CD4-positive, alpha-beta T cell (primary cell): ENCODE measurements at regions of chr9 and their contacts with region 1.

Region 1: GRCh38 chr9:136978073-136978864 is 965 bp downstream of the PTGDS start:
- DNase-seq: peak; percentile 42 to 88 (median 66)
- ATAC-seq: peak; percentile 69
- H3K4me3 ChIP-seq: peak overlapping the region; percentile 29
- H3K4me3 Mint-ChIP-seq: no peak overlapping the region
- H3K27ac ChIP-seq: no peak overlapping the region
- H3K27ac Mint-ChIP-seq: no peak overlapping the region
- H3K4me1 ChIP-seq: peaks cover 57% of the 10 kb centered on the region
- H3K4me1 Mint-ChIP-seq: peaks cover 20% of the 10 kb centered on the region
- H3K27me3 ChIP-seq: peaks cover 1 to 5% of the 10 kb centered on the region in 2 experiments
- H3K27me3 Mint-ChIP-seq: peaks cover 14% of the 10 kb centered on the region
- CTCF ChIP-seq: no peak

Region 2: GRCh38 chr9:135281791-135282731 is 1696.2 kb before region 1 on chr9:
- CTCF ChIA-PET with region 1: no interaction called
- POLR2A ChIA-PET with region 1: no interaction called
- intact Hi-C with region 1: no loop called
- DNase-seq: peak in 10 of 14 experiments; percentile 4 to 52 (median 22)
- ATAC-seq: peak; percentile 62
- H3K4me3 ChIP-seq: no peak overlapping the region
- H3K4me3 Mint-ChIP-seq: no peak overlapping the region
- H3K27ac ChIP-seq: no peak overlapping the region
- H3K27ac Mint-ChIP-seq: peak overlapping the region; percentile 24
- H3K4me1 ChIP-seq: no peaks in the 10 kb centered on the region
- H3K4me1 Mint-ChIP-seq: no peaks in the 10 kb centered on the region
- H3K27me3 ChIP-seq: peaks cover 0 to 4% of the 10 kb centered on the region in 2 experiments
- H3K27me3 Mint-ChIP-seq: no peaks in the 10 kb centered on the region
- CTCF ChIP-seq: no peak

Region 3: DNA sequence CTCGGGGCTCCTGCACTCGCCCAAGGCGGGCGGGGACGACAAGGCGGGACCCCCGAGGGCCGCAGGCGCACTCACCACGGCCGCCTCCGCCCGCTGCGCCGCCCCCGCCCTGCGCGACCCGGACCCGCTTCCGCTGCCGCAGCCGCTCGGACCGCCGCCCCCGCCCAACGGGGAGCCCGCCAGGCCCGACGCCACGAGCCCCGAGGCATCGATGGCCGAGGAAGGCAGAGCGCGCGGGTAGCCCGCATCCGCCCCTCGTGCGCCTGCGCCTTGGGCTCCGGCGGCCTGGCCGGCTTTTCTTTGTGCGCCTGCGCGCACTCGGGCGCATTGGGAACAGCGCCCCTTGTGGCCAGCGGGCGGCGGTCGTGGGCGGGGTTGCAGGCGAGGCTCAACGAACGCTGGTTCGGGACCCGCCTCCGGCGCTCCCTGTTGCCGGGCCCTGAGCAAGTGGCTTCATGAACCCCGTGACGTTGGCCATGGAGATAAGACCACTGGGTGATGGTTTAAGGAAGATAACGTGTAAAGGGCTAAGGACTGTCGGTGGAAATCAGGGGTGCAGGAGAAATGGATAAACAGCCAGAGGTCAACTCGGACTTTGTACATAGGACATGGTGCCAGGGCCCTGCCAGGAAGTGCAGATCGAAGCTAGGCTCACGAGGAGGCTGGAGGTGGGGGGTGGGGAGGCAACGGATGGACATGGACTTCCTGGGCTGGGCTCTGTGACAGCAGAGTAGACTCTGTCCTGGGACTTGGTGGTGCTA is 33.6 kb before region 1 on chr9 and contains the starts of genes C8G and FBXW5:
- CTCF ChIA-PET with region 1: interaction called, 3 read pairs
- POLR2A ChIA-PET with region 1: interaction called, 4 read pairs
- intact Hi-C with region 1: loop called in 1 of 2 experiments (anchors 1 kb)
- DNase-seq: peak; percentile 84 to 97 (median 94)
- ATAC-seq: peak; percentile 86
- H3K4me3 ChIP-seq: peak within 1 kb of the TSS; percentile 69
- H3K4me3 Mint-ChIP-seq: peak within 1 kb of the TSS; percentile 87
- H3K27ac ChIP-seq: peak within 1 kb of the TSS in 1 of 2 donors; percentile 21
- H3K27ac Mint-ChIP-seq: peak within 1 kb of the TSS; percentile 59
- H3K4me1 ChIP-seq: peaks cover 49% of the 10 kb centered on the region
- H3K4me1 Mint-ChIP-seq: peaks cover 5% of the 10 kb centered on the region
- H3K27me3 ChIP-seq: no peaks in the 10 kb centered on the region
- H3K27me3 Mint-ChIP-seq: no peaks in the 10 kb centered on the region
- CTCF ChIP-seq: peak; percentile 96
- total RNA-seq, gene C8G: not detected
- total RNA-seq, gene FBXW5: 41.0 to 41.7 TPM

Region 4: DNA sequence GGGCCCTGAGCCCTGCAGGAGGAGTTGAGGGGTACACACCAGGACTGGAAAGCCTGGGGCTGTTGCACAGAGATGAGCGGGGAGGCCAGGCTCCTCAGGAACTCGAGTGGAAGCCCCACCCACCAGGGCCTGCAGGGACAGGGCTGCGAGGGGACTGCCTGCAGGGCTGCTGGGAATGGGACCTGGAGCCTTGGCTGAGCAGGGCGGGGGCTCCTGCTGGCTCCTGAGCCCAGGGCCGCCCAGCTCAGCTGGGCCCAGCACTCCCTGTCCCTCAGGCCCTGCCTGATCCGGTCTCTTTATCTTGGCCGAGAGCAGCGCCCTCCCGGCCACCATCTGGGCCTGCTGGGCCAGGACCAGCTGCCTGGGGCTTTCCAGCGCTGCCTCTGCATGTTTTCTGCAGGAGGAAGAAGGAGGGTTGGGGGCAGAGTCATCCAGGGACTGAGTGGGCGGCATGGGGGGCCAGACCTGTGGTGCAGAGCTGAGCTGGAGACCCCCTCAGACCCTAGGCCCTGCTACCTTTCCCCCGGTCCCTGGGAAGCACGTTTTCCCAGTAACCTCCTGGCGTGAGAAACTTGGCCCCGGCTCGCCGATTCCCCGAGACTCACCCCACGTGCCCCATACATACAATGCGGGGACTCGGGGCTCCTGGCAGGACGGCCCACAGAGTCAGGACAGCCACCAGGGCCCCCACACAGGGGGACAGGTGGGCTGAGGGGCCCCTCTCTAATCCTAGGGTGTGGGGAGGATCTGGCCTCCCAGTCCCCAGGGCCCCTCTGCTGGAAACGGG is 16.8 kb before region 1 on chr9:
- CTCF ChIA-PET with region 1: no interaction called
- POLR2A ChIA-PET with region 1: interaction called, 12 read pairs
- intact Hi-C with region 1: no loop called
- DNase-seq: no peak
- ATAC-seq: no peak
- H3K4me3 ChIP-seq: no peak overlapping the region
- H3K4me3 Mint-ChIP-seq: no peak overlapping the region
- H3K27ac ChIP-seq: no peak overlapping the region
- H3K27ac Mint-ChIP-seq: no peak overlapping the region
- H3K4me1 ChIP-seq: peaks cover 89% of the 10 kb centered on the region
- H3K4me1 Mint-ChIP-seq: peaks cover 28% of the 10 kb centered on the region
- H3K27me3 ChIP-seq: no peaks in the 10 kb centered on the region
- H3K27me3 Mint-ChIP-seq: no peaks in the 10 kb centered on the region
- CTCF ChIP-seq: no peak

Region 5: DNA sequence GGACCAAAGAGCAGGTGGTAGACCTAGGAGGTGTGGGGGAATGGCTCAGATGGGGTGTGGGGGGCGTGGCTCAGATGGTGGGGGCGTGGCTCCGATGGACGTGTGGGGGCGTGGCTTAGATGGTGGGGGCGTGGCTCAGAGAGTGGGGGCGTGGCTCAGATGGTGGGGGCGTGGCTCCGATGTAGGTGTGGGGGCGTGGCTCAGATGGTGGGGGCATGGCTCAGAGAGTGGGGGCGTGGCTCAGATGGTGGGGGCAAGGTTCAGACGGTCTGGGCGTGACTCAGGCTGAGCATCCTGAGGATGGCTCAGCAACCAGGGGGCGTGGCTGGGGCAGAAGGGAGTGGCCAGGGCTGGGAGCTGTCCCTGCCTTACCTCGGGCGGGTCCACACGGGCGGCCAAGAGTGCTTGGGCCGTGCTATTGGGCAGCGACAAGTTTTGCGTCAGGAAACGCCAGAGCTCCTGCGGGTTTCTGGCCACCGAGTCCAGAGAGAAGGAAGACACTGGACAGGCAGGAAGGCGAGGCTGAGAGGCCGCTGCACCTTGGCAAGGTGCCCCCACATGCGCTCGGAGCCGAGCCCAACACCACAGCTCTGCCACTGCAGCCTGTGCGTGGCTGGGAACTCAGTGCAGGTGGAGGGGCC is 43.8 kb after region 1 on chr9:
- CTCF ChIA-PET with region 1: no interaction called
- POLR2A ChIA-PET with region 1: no interaction called
- intact Hi-C with region 1: no loop called
- DNase-seq: peak; percentile 44 to 90 (median 65)
- ATAC-seq: peak; percentile 86
- H3K4me3 ChIP-seq: no peak overlapping the region
- H3K4me3 Mint-ChIP-seq: peak overlapping the region; percentile 54
- H3K27ac ChIP-seq: no peak overlapping the region
- H3K27ac Mint-ChIP-seq: no peak overlapping the region
- H3K4me1 ChIP-seq: peaks cover 35% of the 10 kb centered on the region
- H3K4me1 Mint-ChIP-seq: peaks cover 9% of the 10 kb centered on the region
- H3K27me3 ChIP-seq: no peaks in the 10 kb centered on the region
- H3K27me3 Mint-ChIP-seq: no peaks in the 10 kb centered on the region
- CTCF ChIP-seq: no peak